CD14-positive monocyte (primary cell): ENCODE measurements at regions of chr10 and their contacts with region 1.

Region 1: GRCh38 chr10:72567884-72568640 is 57.8 kb downstream of the MICU1 start:
- DNase-seq: peak in 2 of 3 donors; percentile 15 to 28
- H3K4me3 ChIP-seq: no peak overlapping the region
- H3K4me3 Mint-ChIP-seq: no peak overlapping the region
- H3K27ac ChIP-seq: peak overlapping the region in 1 of 2 donors; percentile 52
- H3K27ac Mint-ChIP-seq: peak overlapping the region in 6 of 7 donors; percentile 26 to 77 (median 44)
- H3K4me1 ChIP-seq: peaks cover 26 to 34% of the 10 kb centered on the region in 2 donors
- H3K4me1 Mint-ChIP-seq: peaks cover 32% of the 10 kb centered on the region
- H3K27me3 ChIP-seq: no peaks in the 10 kb centered on the region
- H3K27me3 Mint-ChIP-seq: peaks cover 0 to 2% (median 0%) of the 10 kb centered on the region in 3 donors
- CTCF ChIP-seq: peak; percentile 54

Region 2: GRCh38 chr10:72511459-72511858 is 56.6 kb before region 1 on chr10:
- intact Hi-C with region 1: loop called in 1 of 2 experiments (anchors 10 kb)
- DNase-seq: peak; percentile 79 to 95 (median 87)
- H3K4me3 ChIP-seq: peak overlapping the region in 1 of 3 experiments; percentile 38
- H3K4me3 Mint-ChIP-seq: peak overlapping the region; percentile 61 to 80
- H3K27ac ChIP-seq: peak overlapping the region; percentile 80 to 86
- H3K27ac Mint-ChIP-seq: peak overlapping the region; percentile 97 to 100 (median 99)
- H3K4me1 ChIP-seq: peaks cover 44 to 57% of the 10 kb centered on the region in 2 donors
- H3K4me1 Mint-ChIP-seq: peaks cover 53% of the 10 kb centered on the region
- H3K27me3 ChIP-seq: no peaks in the 10 kb centered on the region
- H3K27me3 Mint-ChIP-seq: no peaks in the 10 kb centered on the region
- CTCF ChIP-seq: no peak